ENCODE measurements at regions of chr3 and their contacts with region 1.

Region 1: DNA sequence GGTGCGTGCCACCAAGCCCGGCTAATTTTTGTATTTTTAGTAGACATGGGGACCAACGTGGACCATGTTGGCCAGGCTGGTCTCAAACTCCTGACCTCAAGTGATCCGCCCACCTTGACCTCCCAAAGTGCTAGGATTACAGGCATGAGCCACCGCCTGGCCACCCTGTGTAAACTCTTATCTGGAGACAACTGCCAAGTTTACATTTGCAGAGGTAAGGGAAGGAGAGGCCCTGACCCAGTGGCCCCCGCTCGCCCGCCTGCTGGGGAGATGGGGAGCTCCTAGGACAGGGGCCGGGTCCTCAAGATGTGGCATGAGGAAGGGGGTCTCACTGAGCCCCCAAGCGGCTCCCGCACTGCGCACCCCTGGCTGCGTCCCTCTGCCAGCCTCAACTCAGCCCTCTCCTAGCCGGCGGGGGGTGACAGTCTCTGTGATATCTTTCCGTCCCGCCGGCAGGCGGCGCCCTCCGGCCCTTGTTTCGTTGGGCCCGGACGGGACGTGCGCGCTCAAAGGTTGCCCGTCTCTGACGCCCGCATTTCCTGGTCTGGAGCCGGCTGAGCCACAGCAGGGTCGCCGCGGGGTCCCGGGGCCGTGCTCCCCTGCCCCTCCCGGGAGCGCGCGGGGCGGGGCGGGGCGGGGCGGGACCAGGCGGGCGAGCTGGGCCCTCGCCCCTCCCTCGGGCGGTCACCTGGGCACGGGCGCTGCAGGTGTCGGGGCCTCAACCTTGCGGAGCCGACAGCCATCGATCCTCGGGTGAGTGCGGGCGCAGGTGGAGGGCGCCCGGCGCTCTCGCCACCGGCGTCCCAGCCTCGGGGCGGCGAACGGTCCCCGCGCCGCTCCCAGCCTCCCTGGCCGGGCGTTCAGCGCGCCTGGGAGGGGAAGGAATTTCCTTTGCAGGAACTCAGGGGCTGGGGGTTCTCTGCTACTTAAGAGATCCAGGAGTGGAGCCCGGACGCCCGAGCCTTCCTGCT is at the start of gene GPR160:
- DNase-seq: peak; percentile 75 to 82 (median 79)
- H3K4me3 ChIP-seq: peak within 1 kb of the TSS; percentile 39 to 77
- H3K4me3 Mint-ChIP-seq: peak within 1 kb of the TSS; percentile 84 to 92 (median 88)
- H3K27ac ChIP-seq: peak within 1 kb of the TSS; percentile 41
- H3K27ac Mint-ChIP-seq: peak within 1 kb of the TSS; percentile 25 to 90 (median 79)
- H3K4me1 ChIP-seq: peaks cover 21% of the 10 kb centered on the region
- H3K4me1 Mint-ChIP-seq: peaks cover 16 to 38% (median 29%) of the 10 kb centered on the region in 4 donors
- H3K27me3 ChIP-seq: no peaks in the 10 kb centered on the region
- H3K27me3 Mint-ChIP-seq: no peaks in the 10 kb centered on the region
- total RNA-seq, gene GPR160: 13.1 to 14.9 TPM

Region 2: GRCh38 chr3:169764452-169765274 is 273.1 kb before region 1 on chr3 and contains the start of gene TERC:
- CTCF ChIA-PET with region 1: interaction called, 3 read pairs
- POLR2A ChIA-PET with region 1: interaction called, 8 read pairs
- intact Hi-C with region 1: loop called (anchors 2 kb)
- DNase-seq: peak; percentile 93 to 96 (median 95)
- H3K4me3 ChIP-seq: peak within 1 kb of the TSS; percentile 36 to 70
- H3K4me3 Mint-ChIP-seq: peak within 1 kb of the TSS; percentile 94 to 98 (median 98)
- H3K27ac ChIP-seq: peak within 1 kb of the TSS; percentile 87
- H3K27ac Mint-ChIP-seq: peak within 1 kb of the TSS; percentile 95 to 99 (median 98)
- H3K4me1 ChIP-seq: peaks cover 23% of the 10 kb centered on the region
- H3K4me1 Mint-ChIP-seq: peaks cover 15 to 43% (median 23%) of the 10 kb centered on the region in 4 donors
- H3K27me3 ChIP-seq: no peaks in the 10 kb centered on the region
- H3K27me3 Mint-ChIP-seq: no peaks in the 10 kb centered on the region
- total RNA-seq, gene TERC: 15.6 to 15.7 TPM

Region 3: DNA sequence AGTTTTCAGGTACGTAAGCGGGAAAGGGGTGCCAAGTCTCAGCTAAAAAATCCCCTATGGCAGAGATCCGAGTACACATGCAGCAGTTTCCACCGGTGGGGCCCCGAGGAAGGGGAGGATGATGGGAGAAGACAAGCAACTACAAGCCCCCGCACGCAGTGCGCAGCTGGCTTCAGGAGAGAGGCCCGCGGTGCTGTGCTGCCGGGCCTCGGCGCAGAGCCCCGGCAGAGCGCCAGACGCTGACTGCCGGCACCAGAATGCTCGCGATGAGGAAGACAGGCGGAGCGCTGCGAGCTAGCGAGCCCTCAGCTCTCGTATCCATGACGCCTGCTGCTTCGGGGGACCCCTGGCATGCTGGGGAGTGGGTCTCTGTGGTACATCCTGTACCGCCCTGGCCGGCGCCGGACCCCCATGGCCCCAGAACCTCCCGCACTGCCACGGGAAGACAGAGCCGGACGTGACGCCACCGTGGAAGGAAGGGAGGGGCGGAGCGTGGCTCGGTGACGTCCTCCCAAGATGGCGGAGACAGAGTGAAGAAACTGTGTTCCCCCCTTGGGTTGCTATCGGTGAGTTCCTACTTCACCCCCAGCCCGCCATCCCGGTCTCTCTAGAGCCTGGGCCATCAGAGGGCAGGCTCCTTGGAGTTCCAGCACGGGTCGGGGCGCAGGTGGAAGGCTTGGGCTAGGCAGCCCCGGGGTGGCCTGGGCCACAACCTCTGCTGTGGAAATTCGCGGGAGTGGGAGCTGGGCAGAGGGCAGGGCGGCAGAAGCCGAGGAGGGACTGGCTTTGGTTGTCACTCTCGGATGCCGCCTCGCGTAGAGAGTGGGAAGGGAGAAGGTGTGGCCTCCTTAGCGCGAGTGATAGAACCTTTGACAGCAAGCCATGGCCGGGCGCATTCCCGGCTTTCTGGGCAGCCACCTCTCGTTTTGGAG is 264.6 kb before region 1 on chr3 and contains the start of gene MYNN:
- CTCF ChIA-PET with region 1: no interaction called
- POLR2A ChIA-PET with region 1: interaction called, 8 read pairs
- intact Hi-C with region 1: loop called (anchors 5 kb)
- DNase-seq: peak; percentile 92 to 95 (median 94)
- H3K4me3 ChIP-seq: peak within 1 kb of the TSS; percentile 83 to 94
- H3K4me3 Mint-ChIP-seq: peak within 1 kb of the TSS; percentile 92 to 99 (median 98)
- H3K27ac ChIP-seq: peak within 1 kb of the TSS; percentile 99
- H3K27ac Mint-ChIP-seq: peak within 1 kb of the TSS; percentile 98 to 100 (median 99)
- H3K4me1 ChIP-seq: peaks cover 36% of the 10 kb centered on the region
- H3K4me1 Mint-ChIP-seq: peaks cover 27 to 70% (median 43%) of the 10 kb centered on the region in 4 donors
- H3K27me3 ChIP-seq: no peaks in the 10 kb centered on the region
- H3K27me3 Mint-ChIP-seq: peaks cover 0 to 11% of the 10 kb centered on the region in 2 donors
- total RNA-seq, gene MYNN: 21.1 to 23.0 TPM

Region 4: GRCh38 chr3:170007031-170007663 is 30.6 kb before region 1 on chr3:
- CTCF ChIA-PET with region 1: interaction called, 4 read pairs
- POLR2A ChIA-PET with region 1: interaction called, 4 read pairs
- intact Hi-C with region 1: loop called (anchors 1 kb)
- DNase-seq: peak in 4 of 5 donors; percentile 24 to 31 (median 26)
- H3K4me3 ChIP-seq: no peak overlapping the region
- H3K4me3 Mint-ChIP-seq: peak overlapping the region in 7 of 8 donors; percentile 4 to 60 (median 23)
- H3K27ac ChIP-seq: no peak overlapping the region
- H3K27ac Mint-ChIP-seq: peak overlapping the region in 4 of 7 donors; percentile 2 to 77 (median 22)
- H3K4me1 ChIP-seq: peaks cover 30% of the 10 kb centered on the region
- H3K4me1 Mint-ChIP-seq: peaks cover 24 to 37% (median 31%) of the 10 kb centered on the region in 4 donors
- H3K27me3 ChIP-seq: no peaks in the 10 kb centered on the region
- H3K27me3 Mint-ChIP-seq: no peaks in the 10 kb centered on the region

Region 5: DNA sequence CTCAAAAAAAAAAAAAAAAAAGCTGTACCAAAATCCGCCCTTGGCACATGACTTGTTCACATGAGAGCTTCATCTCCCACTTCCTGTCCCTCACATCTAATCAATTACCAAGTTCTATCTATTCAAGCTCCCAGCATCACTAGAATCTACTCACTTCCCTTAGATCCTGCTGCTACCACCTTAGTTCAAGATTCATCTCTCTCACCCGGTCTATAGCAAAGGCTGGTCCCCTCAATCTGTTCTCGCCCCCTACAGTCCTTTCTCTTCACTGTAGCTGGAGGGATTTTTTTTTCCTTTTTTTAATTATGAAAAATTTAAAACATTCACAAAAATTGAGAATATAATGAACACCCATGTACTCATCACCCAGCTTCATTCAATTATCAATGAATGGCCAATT is 16.7 kb before region 1 on chr3:
- CTCF ChIA-PET with region 1: interaction called, 11 read pairs
- POLR2A ChIA-PET with region 1: no interaction called
- intact Hi-C with region 1: no loop called
- DNase-seq: no peak
- H3K4me3 ChIP-seq: no peak overlapping the region
- H3K4me3 Mint-ChIP-seq: no peak overlapping the region
- H3K27ac ChIP-seq: no peak overlapping the region
- H3K27ac Mint-ChIP-seq: peak overlapping the region in 3 of 7 donors; percentile 10 to 15 (median 14)
- H3K4me1 ChIP-seq: peaks cover 7% of the 10 kb centered on the region
- H3K4me1 Mint-ChIP-seq: peaks cover 9 to 18% (median 11%) of the 10 kb centered on the region in 4 donors
- H3K27me3 ChIP-seq: no peaks in the 10 kb centered on the region
- H3K27me3 Mint-ChIP-seq: peaks cover 0 to 2% of the 10 kb centered on the region in 2 donors

Region 6: DNA sequence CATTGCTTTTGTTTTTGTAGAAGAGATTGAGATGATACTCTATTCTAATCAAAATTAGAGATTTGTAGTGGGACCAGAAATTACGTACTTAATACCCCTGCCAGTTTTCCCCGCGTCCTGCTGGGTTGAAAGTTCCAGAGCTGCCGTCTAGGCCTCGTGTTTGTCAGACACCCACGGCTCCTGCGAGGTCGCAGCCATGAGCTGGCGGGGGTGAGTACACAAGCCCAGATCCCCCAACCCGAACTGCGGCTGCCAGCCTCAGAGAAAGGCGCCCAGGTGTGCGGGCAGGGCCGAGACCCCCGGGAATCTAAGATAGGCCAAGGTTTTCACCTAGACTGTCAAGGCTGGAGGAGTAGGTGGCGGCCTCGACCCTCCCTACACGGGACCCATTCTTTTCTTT is 26.4 kb after region 1 on chr3:
- CTCF ChIA-PET with region 1: no interaction called
- POLR2A ChIA-PET with region 1: no interaction called
- intact Hi-C with region 1: no loop called
- DNase-seq: no peak
- H3K4me3 ChIP-seq: no peak overlapping the region
- H3K4me3 Mint-ChIP-seq: no peak overlapping the region
- H3K27ac ChIP-seq: no peak overlapping the region
- H3K27ac Mint-ChIP-seq: no peak overlapping the region
- H3K4me1 ChIP-seq: no peaks in the 10 kb centered on the region
- H3K4me1 Mint-ChIP-seq: peaks cover 0 to 1% (median 0%) of the 10 kb centered on the region in 4 donors
- H3K27me3 ChIP-seq: no peaks in the 10 kb centered on the region
- H3K27me3 Mint-ChIP-seq: no peaks in the 10 kb centered on the region

Region 7: GRCh38 chr3:170368921-170369320 is 331.2 kb after region 1 on chr3:
- CTCF ChIA-PET with region 1: no interaction called
- POLR2A ChIA-PET with region 1: no interaction called
- intact Hi-C with region 1: loop called (anchors 5 kb)
- DNase-seq: peak in 2 of 5 donors; percentile 15 to 19
- H3K4me3 ChIP-seq: no peak overlapping the region
- H3K4me3 Mint-ChIP-seq: no peak overlapping the region
- H3K27ac ChIP-seq: no peak overlapping the region
- H3K27ac Mint-ChIP-seq: peak overlapping the region in 1 of 7 donors; percentile 15
- H3K4me1 ChIP-seq: peaks cover 15% of the 10 kb centered on the region
- H3K4me1 Mint-ChIP-seq: peaks cover 18 to 28% (median 23%) of the 10 kb centered on the region in 4 donors
- H3K27me3 ChIP-seq: no peaks in the 10 kb centered on the region
- H3K27me3 Mint-ChIP-seq: no peaks in the 10 kb centered on the region

Measured in CD4-positive, alpha-beta memory T cell (primary cell).